ENCODE measurements at regions of chr2 and their contacts with region 1.

Region 1: GRCh38 chr2:191811807-191812602 is 34.9 kb downstream of the CAVIN2 start:
- DNase-seq: peak; percentile 47
- H3K4me3 ChIP-seq: no peak overlapping the region
- H3K27ac ChIP-seq: no peak overlapping the region
- H3K27me3 ChIP-seq: no peaks in the 10 kb centered on the region
- CTCF ChIP-seq: peak; percentile 90

Region 2: DNA sequence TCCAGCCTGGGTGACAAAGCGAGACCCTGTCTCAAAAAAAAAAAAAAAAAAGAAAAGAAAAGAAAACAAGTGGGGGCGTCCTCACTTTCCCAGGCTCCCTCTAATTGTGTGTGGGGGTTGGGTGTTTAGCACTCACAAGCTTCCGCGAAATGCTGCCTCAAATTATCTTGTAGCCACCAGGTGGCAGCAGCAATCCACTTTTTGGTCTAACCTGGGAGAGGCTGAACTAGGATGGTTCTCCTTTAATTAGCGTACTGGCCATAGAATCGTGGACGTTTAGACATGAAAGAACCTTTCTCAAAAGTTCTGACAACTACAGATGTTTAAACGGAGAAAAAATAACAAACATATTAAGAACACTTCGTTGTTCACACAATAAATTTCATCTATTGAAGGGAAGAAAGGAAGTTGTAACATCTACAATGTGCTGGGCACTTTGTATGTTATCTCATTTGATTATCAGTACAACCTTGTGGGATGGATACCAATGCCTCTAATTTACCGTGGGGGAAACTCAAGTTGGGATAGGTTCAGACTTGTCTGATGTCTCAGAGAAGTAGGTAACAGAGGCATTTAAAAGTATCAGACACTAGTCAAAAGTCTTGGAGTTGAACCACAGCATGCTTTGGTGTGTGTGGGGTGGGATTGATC is 256.8 kb before region 1 on chr2:
- CTCF ChIA-PET with region 1: interaction called, 27 read pairs
- POLR2A ChIA-PET with region 1: no interaction called
- DNase-seq: peak; percentile 61
- H3K4me3 ChIP-seq: no peak overlapping the region
- H3K27ac ChIP-seq: no peak overlapping the region
- H3K27me3 ChIP-seq: peaks cover 3% of the 10 kb centered on the region
- CTCF ChIP-seq: peak; percentile 76

Region 3: DNA sequence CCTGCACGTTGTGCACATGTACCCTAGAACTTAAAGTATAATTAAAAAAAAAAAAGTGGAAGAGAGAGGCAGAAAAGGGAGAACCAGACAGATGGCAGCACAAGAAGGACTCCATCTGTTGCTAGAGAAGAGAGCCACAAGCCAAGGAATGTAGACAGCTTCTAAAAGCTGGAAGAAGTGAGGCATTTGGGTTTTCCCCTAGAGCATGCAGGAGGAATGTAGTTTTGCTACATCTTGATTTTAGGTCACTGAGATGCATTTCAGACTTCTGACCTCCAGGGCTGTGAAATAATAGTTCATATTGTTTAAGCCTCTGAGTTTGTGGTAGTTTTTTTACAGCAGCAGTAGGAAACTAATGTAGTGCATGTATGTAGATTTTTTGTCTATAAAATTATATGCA is 11.1 kb before region 1 on chr2:
- CTCF ChIA-PET with region 1: interaction called, 17 read pairs
- POLR2A ChIA-PET with region 1: no interaction called
- DNase-seq: no peak
- H3K4me3 ChIP-seq: no peak overlapping the region
- H3K27ac ChIP-seq: no peak overlapping the region
- H3K27me3 ChIP-seq: no peaks in the 10 kb centered on the region
- CTCF ChIP-seq: no peak

Region 4: DNA sequence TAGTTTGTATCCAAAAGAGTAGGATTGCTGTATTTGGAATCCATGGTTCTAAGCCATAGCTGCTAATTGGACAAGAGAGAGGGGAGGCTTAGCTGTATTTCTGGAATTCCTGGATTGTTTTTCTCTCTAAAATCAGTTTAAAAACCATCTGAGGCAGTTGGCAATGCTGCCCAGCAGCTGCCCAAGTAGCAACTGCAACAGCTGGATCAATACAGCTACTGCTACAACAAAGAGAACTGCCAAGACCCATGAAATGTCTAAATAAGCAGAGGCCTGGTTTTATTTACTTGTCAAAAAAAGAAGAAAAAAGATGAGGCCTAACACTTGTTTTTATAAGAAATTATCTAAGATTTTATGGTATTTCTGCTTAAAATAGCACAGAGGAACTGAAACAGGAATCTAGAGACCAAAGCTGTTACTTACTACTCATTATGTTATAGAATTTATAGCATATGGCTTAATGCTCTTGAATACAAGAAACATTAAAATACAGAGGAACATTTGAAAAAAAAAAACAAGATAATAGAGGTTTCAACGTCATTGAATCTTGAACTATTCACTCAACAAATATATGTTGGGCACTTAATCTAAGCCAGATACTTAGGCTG is 343.6 kb after region 1 on chr2:
- CTCF ChIA-PET with region 1: interaction called, 533 read pairs
- POLR2A ChIA-PET with region 1: no interaction called
- DNase-seq: no peak
- H3K4me3 ChIP-seq: no peak overlapping the region
- H3K27ac ChIP-seq: no peak overlapping the region
- H3K27me3 ChIP-seq: no peaks in the 10 kb centered on the region
- CTCF ChIP-seq: no peak

Region 5: DNA sequence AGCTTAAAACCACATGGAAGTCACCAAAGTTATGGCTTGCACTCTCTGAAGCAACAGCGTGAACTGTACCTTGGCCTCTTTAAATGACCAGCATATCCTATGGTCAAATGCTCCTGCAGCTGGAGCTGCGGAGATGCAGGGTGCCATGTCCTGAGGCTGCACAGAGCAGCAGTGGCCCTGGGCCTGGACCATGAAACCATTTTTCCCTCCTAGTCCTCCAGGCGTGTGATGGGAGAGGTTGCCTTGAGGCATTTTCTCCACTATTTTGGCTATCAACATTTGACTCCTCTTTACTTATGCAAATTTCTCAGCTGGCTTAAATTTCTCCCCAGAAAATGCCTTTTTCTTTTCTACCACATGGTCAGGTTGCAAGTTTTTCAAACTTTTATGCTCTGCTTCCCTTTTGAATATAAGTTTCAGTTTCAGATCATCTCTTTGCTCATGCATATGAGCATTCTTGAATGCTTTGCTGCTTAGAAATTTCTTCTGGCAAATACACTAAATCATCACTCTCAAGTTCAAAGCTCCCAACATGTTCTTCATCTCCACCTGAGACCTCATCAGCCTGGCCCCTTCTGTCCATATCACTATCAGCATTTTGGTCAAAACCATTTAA is 465.6 kb after region 1 on chr2:
- CTCF ChIA-PET with region 1: interaction called, 12 read pairs
- POLR2A ChIA-PET with region 1: no interaction called
- DNase-seq: no peak
- H3K4me3 ChIP-seq: no peak overlapping the region
- H3K27ac ChIP-seq: no peak overlapping the region
- H3K27me3 ChIP-seq: no peaks in the 10 kb centered on the region
- CTCF ChIP-seq: no peak

Region 6: GRCh38 chr2:192298664-192299063 is 486.7 kb after region 1 on chr2:
- CTCF ChIA-PET with region 1: interaction called, 10 read pairs
- POLR2A ChIA-PET with region 1: no interaction called
- DNase-seq: no peak
- H3K4me3 ChIP-seq: no peak overlapping the region
- H3K27ac ChIP-seq: no peak overlapping the region
- H3K27me3 ChIP-seq: no peaks in the 10 kb centered on the region
- CTCF ChIP-seq: no peak